Transverse colon (tissue), 4 donors: ENCODE measurements at regions of chr12 and their contacts with region 1.

Region 1: DNA sequence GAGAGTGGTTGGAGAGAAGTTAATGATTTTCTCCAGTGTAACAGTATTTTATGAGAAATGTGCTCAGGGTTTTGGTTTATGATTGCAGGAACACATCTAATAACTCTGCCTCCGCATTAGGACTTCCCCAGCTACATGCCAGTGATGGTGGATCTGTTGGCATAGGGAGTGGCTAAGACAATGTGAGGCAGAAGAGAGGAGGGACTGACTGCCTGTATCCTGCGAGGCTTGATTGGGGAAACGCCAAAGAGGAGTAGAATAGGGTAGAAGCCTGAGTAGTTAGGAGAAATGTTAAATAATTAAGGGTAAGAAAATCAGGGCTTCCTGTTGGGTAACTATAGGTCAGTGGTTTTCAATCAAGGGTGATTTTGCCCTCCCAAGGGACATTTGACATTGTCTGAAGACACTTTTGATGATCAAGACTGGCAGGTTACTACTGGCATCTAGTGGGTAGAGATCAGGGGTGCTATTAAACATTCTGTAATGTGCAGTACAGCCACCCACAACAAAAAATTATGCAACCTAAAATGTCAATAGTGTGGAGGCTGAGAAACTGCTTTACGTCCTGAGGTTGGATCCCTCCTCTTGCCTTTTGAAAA is 12.8 kb downstream of the TDG start:
- DNase-seq: no peak
- H3K4me3 ChIP-seq: no peak overlapping the region
- H3K27ac ChIP-seq: no peak overlapping the region
- H3K4me1 ChIP-seq: no peaks in the 10 kb centered on the region
- H3K27me3 ChIP-seq: no peaks in the 10 kb centered on the region
- CTCF ChIP-seq: no peak
- EP300 ChIP-seq: no peak
- POLR2A ChIP-seq: no peak

Region 2: GRCh38 chr12:103908866-103909265 is 69.6 kb before region 1 on chr12:
- in situ Hi-C with region 1: no loop called
- intact Hi-C with region 1: no loop called
- DNase-seq: no peak
- H3K4me3 ChIP-seq: no peak overlapping the region
- H3K27ac ChIP-seq: no peak overlapping the region
- H3K4me1 ChIP-seq: no peaks in the 10 kb centered on the region
- H3K27me3 ChIP-seq: no peaks in the 10 kb centered on the region
- CTCF ChIP-seq: no peak
- EP300 ChIP-seq: no peak
- POLR2A ChIP-seq: no peak

Region 3: DNA sequence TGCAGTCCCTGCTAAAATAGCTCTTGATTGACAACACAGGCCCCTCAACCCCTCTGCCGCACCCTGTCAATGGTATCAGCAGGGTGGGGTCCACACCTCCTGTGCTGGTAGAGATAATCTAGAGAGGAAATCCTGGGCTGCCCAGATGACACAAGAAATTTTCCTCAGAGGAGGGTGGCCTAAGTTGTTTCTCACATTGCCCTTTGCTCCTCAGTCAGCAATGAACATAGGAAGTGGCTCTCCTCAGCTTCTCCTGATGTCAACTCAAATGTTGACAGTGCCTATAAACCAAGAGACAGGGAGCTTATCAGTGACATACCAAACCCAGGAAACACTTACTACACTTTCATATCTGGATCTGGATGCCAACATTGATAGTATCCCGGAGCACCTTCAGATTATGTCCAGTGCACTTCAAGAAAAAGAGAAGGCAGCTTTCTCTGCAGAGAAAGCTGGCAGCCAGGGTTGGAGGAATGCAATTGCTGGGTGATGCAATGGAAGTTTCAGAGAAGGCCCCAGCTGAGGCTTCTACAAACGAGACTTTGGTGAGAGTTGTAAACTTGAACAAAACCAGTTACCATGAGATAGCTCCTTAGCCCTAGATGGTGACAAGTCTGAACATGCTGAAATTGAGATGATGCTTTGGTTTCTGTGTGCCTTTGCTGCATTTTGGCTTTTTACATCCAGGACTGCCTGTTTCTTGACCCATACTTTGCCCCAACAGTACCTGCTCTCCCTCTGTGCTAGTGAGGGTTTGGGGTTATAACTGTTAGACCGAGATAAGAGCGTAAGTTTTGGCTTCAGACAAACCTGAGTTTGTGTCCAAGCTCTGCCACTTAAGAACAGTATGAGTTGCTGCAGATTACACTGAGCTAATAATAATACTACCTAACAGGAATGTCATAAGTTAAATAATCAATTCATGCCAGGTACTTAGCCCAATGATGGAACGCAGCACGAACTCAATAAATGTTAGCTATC is 1976.8 kb after region 1 on chr12:
- in situ Hi-C with region 1: no loop called
- intact Hi-C with region 1: loop called (anchors 5 kb)
- DNase-seq: no peak
- H3K4me3 ChIP-seq: no peak overlapping the region
- H3K27ac ChIP-seq: no peak overlapping the region
- H3K4me1 ChIP-seq: no peaks in the 10 kb centered on the region
- H3K27me3 ChIP-seq: no peaks in the 10 kb centered on the region
- CTCF ChIP-seq: no peak
- EP300 ChIP-seq: no peak
- POLR2A ChIP-seq: no peak